Activated CD4-positive, alpha-beta T cell treated with anti-CD3 and anti-CD28 coated beads, Interleukin-2, amount 10 ng/mL, durations not matched to agents 7 days and 5 days (primary cell): ENCODE measurements at regions of chr11 and their contacts with region 1.

Region 1: GRCh38 chr11:10878408-10879214 is 20.8 kb upstream of the ZBED5 start:
- DNase-seq: peak; percentile 55
- H3K4me3 Mint-ChIP-seq: no peak overlapping the region
- H3K27ac Mint-ChIP-seq: peak overlapping the region; percentile 56
- H3K4me1 Mint-ChIP-seq: peaks cover 10% of the 10 kb centered on the region
- H3K27me3 Mint-ChIP-seq: no peaks in the 10 kb centered on the region

Region 2: GRCh38 chr11:10674911-10675440 is 203.6 kb before region 1 on chr11:
- CTCF ChIA-PET with region 1: no interaction called
- POLR2A ChIA-PET with region 1: no interaction called
- DNase-seq: no peak
- H3K4me3 Mint-ChIP-seq: no peak overlapping the region
- H3K27ac Mint-ChIP-seq: no peak overlapping the region
- H3K4me1 Mint-ChIP-seq: no peaks in the 10 kb centered on the region
- H3K27me3 Mint-ChIP-seq: peaks cover 51% of the 10 kb centered on the region

Region 3: DNA sequence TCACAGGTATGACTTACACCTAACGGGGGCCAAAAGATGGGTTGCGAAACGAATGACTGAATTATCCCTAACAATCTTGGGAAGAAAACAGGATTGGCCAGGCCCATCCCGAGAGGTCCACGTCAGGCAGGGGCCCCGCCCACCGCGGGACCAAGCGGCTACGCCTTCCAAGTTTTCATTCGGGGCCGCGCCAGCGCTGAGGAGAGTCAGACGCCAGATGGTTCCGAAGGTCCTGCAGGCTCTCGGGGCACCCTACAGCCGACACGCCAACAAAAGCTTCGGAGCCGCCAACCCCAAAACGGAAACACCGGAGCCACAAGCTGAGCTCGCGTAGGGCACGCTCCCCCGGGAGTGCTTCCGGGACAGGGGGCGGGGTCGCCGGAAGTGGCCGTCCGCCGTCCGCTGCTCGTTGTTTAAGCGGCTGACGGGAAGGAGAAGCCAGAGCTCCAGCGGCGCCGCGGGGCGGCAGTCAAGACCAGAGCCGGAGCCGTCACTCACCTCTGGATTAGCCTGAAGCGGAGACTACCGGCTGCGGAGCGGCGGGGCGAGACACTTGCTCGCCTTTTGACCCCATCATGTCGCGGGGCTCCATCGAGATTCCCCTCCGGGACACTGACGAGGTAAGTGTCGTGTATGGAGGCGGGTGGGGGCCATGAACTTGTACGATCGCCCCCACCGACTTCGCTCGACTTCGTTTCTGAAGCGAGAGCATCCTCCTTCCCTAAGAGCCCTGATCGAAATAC is 127.6 kb before region 1 on chr11 and contains the start of gene CTR9:
- CTCF ChIA-PET with region 1: no interaction called
- POLR2A ChIA-PET with region 1: no interaction called
- DNase-seq: peak; percentile 93
- H3K4me3 Mint-ChIP-seq: peak within 1 kb of the TSS; percentile 95
- H3K27ac Mint-ChIP-seq: peak within 1 kb of the TSS; percentile 88
- H3K4me1 Mint-ChIP-seq: peaks cover 32% of the 10 kb centered on the region
- H3K27me3 Mint-ChIP-seq: no peaks in the 10 kb centered on the region
- total RNA-seq, gene CTR9: 45.3 to 47.0 TPM

Region 4: DNA sequence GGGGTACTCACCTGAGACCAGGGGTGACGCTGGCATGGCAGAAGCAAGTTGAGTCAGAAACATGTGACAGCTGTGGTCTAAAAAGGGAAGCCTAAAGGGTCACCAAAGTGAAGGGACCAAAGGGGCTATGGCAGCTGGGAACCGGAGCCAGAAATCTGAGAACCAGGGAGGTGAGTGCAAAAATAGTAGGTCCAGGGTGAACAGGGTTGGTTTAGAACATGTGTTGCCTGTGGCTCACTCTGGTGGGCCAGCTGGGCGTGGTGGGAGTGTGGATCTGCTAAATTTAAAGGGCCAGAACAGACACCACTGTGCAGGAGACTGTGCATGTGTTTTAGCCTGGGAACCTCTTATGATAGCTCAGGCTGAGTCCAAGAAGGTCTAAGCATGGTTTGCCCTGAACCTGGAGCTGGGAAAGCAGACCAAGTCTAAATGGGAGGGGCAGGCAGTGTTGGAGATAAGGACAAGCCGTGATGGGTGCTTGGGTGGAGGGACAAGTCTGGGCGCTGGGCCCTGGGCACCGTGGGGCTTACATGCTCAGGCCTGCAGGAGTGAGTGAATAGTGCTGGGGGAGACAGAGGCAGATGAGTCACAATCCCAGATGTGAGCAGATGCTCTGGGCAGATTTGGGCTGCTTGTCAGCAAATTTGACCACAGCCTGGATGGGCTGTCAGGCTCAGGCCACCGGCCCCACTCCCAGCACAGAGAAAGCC is 20.7 kb after region 1 on chr11:
- CTCF ChIA-PET with region 1: interaction called, 13 read pairs
- POLR2A ChIA-PET with region 1: interaction called, 3 read pairs
- DNase-seq: no peak
- H3K4me3 Mint-ChIP-seq: no peak overlapping the region
- H3K27ac Mint-ChIP-seq: no peak overlapping the region
- H3K4me1 Mint-ChIP-seq: peaks cover 16% of the 10 kb centered on the region
- H3K27me3 Mint-ChIP-seq: no peaks in the 10 kb centered on the region